Panc1 (cell line): ENCODE measurements at regions of chr7 and their contacts with region 1.

Region 1: DNA sequence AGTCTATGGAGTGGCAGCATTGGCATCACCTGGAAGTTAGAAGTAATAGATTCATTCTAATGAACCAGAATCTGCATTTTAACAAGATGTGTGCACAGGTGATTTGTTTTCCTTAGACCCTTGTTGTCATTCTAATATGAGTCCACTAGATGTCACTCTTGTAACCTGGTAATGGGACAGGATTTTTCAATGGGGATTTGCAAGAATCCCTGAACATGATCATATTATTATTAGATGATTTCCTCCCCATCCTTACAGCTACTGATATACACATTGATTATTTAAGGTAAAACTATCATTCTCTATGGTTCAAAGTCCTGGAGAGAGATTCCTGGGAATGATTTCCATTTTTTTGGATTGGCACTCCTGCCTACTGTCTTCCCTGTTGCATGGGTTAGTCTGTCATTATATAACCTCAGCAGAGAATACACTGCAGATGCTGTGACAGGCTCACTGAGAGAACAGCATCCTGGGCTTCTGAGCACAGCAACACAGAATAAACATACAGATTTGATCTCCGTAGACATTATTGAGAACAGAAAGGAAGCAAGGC is 194.9 kb downstream of the SUGCT start:
- DNase-seq: peak; percentile 58
- ATAC-seq: peak; percentile 76
- H3K4me3 ChIP-seq: no peak overlapping the region
- H3K27ac ChIP-seq: no peak overlapping the region
- H3K4me1 ChIP-seq: no peaks in the 10 kb centered on the region
- H3K27me3 ChIP-seq: no peaks in the 10 kb centered on the region
- CTCF ChIP-seq: peak; percentile 83

Region 2: DNA sequence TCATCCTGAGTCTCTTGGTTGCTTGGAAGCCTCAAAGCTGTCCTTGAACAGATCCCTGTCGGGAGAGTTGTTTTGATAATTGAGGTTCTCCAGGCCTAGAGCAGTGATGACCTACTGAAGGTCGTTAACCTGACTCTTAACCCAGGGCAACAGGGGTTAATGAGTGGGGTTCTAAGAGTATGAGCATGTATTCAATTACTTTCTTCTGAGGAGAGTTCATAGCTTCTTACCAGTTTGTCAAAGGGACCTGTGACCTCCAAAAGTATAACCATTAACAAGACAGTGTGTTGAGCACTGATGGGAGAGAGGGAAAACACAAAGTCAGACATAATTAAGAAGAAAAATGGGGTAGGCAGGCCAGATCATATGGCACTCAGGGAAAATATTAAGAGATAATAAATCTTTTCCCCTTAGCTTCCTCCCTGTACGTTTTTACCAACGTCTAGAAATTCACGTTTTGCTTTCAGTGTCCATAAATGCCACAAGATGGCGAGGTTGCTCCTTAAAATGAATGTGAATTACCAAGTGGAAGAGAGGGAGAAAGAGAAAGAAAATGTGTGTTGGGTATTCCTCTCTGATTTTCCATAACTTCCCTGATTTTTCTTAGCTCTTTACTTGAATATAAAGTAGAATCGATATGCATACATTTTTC is 97.3 kb before region 1 on chr7:
- CTCF ChIA-PET with region 1: no interaction called
- POLR2A ChIA-PET with region 1: no interaction called
- in situ Hi-C with region 1: no loop called
- intact Hi-C with region 1: loop called (anchors 10 kb)
- DNase-seq: peak; percentile 35
- ATAC-seq: peak; percentile 85
- H3K4me3 ChIP-seq: no peak overlapping the region
- H3K27ac ChIP-seq: no peak overlapping the region
- H3K4me1 ChIP-seq: no peaks in the 10 kb centered on the region
- H3K27me3 ChIP-seq: no peaks in the 10 kb centered on the region
- CTCF ChIP-seq: peak; percentile 72; the same call in 1 of the 2 replicates

Region 3: GRCh38 chr7:40604601-40605438 is 275.1 kb after region 1 on chr7:
- CTCF ChIA-PET with region 1: no interaction called
- POLR2A ChIA-PET with region 1: no interaction called
- in situ Hi-C with region 1: no loop called
- intact Hi-C with region 1: loop called (anchors 2 kb)
- DNase-seq: peak; percentile 12
- ATAC-seq: peak; percentile 94
- H3K4me3 ChIP-seq: no peak overlapping the region
- H3K27ac ChIP-seq: no peak overlapping the region
- H3K4me1 ChIP-seq: no peaks in the 10 kb centered on the region
- H3K27me3 ChIP-seq: no peaks in the 10 kb centered on the region
- CTCF ChIP-seq: peak; percentile 90

Region 4: GRCh38 chr7:41705109-41705901 is 1375.6 kb after region 1 on chr7:
- CTCF ChIA-PET with region 1: interaction called, 3 read pairs
- POLR2A ChIA-PET with region 1: no interaction called
- in situ Hi-C with region 1: no loop called
- intact Hi-C with region 1: loop called (anchors 5 kb)
- DNase-seq: no peak
- ATAC-seq: peak; percentile 100
- H3K4me3 ChIP-seq: peak overlapping the region; percentile 47 to 70
- H3K27ac ChIP-seq: peak overlapping the region; percentile 68
- H3K4me1 ChIP-seq: no peaks in the 10 kb centered on the region
- H3K27me3 ChIP-seq: peaks cover 3% of the 10 kb centered on the region
- CTCF ChIP-seq: peak; percentile 99

Region 5: GRCh38 chr7:41731492-41732435 is 1402.1 kb after region 1 on chr7:
- CTCF ChIA-PET with region 1: no interaction called
- POLR2A ChIA-PET with region 1: no interaction called
- in situ Hi-C with region 1: no loop called
- intact Hi-C with region 1: loop called (anchors 5 kb)
- DNase-seq: no peak
- ATAC-seq: no peak
- H3K4me3 ChIP-seq: no peak overlapping the region
- H3K27ac ChIP-seq: no peak overlapping the region
- H3K4me1 ChIP-seq: no peaks in the 10 kb centered on the region
- H3K27me3 ChIP-seq: peaks cover 3% of the 10 kb centered on the region; the same call in 1 of the 2 replicates
- CTCF ChIP-seq: peak; percentile 53; the same call in 1 of the 2 replicates